MCF 10A (cell line): ENCODE measurements at regions of chr13 and their contacts with region 1.

Region 1: DNA sequence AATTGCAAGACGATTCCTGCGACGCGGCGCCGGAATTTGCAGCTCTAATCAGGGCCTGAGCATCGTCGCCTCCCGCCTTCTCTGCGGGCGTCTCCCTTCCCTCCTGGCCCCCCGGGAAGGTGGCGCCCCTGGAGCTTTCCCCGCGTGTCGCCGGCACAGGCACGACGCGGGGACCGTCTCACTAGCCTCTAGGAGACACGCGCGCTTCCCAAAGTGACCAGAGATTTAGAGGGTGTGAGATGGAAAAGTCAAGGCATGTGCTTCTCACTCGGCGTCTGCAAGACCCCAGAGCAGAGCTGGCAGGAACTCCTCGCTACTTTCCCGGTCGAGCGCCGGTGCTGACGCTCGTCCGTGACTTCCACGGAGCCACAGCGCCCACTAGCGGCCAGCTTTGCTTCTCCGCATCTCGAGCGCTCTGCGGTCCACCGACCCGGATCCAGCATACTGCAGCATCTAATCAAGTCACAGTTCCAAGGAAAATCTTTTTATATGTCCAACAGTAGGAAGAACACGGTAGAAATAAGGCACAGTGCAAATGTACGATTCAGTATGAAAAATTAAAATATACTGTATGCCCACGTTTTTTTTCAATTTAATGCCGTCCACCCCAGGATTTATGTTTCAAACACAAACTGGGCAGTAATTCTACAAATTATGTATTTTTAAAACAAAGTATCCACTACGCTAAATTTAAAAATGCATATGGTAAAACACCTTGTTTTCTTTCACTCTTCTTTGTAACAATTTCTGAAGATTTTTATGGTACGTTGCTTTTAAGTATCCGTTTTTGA is 977 bp upstream of the EFNB2 start:
- DNase-seq: peak; percentile 84
- H3K4me3 Mint-ChIP-seq: peak overlapping the region; percentile 95
- H3K27ac Mint-ChIP-seq: peak overlapping the region; percentile 46
- H3K4me1 Mint-ChIP-seq: no peaks in the 10 kb centered on the region
- H3K27me3 Mint-ChIP-seq: no peaks in the 10 kb centered on the region
- CTCF ChIP-seq: peak; percentile 91

Region 2: DNA sequence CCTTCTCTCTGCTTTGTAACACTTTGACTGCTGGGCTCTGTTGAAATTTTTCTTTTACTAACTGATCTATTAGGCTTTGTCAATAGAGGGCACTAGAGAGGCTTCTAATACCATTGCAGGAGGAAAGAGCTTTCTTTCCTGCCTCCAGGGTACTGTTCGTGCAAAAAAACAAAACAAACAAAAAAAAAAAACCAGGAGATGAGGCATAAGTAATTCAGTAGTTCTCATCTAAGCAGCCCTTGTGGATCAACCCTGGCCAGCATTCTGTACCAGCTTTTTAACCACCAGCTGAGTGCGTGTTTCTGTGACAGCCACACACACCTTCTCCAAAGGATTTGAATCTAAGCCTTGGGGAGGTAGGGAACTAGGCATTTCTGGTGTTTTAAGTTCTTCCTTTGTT is 1762.7 kb before region 1 on chr13:
- CTCF ChIA-PET with region 1: interaction called, 4 read pairs
- POLR2A ChIA-PET with region 1: interaction called, 7 read pairs
- intact Hi-C with region 1: loop called (anchors 1 kb)
- DNase-seq: peak; percentile 68
- H3K4me3 Mint-ChIP-seq: no peak overlapping the region
- H3K27ac Mint-ChIP-seq: no peak overlapping the region
- H3K4me1 Mint-ChIP-seq: peaks cover 11% of the 10 kb centered on the region
- H3K27me3 Mint-ChIP-seq: no peaks in the 10 kb centered on the region
- CTCF ChIP-seq: peak; percentile 62

Region 3: DNA sequence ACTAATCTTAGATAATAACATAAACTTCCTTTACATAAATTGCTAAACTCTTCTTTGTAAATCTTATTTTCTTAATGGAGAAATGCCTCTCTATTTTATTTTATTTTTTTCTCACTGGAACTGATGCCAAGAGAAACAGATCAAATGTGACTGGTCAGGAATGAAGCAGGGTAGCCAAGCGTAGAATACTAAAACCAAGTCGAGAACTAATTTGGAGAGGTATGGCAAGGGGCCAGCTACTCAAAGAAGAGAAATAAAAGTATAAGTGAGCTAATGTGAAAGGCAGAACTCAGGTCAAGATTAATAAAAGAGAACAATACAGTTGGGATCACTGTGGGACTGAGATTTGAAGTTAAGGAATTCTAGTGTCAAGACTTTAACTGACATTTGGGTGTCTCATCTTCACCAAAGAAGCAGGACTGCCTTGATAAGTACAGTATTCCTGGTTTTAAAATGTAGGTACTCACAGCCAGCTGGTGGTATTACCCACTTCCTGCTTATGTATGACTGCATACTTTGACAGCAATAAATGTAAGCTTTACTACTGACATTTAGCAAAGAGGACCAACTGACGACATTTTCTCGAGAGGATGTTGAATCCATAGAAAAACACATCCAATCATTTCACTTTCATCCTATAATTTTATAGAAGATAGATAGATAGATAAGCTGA is 1193.2 kb before region 1 on chr13:
- CTCF ChIA-PET with region 1: no interaction called
- POLR2A ChIA-PET with region 1: no interaction called
- intact Hi-C with region 1: no loop called
- DNase-seq: peak; percentile 6
- H3K4me3 Mint-ChIP-seq: no peak overlapping the region
- H3K27ac Mint-ChIP-seq: no peak overlapping the region
- H3K4me1 Mint-ChIP-seq: peaks cover 11% of the 10 kb centered on the region
- H3K27me3 Mint-ChIP-seq: no peaks in the 10 kb centered on the region
- CTCF ChIP-seq: no peak

Region 4: DNA sequence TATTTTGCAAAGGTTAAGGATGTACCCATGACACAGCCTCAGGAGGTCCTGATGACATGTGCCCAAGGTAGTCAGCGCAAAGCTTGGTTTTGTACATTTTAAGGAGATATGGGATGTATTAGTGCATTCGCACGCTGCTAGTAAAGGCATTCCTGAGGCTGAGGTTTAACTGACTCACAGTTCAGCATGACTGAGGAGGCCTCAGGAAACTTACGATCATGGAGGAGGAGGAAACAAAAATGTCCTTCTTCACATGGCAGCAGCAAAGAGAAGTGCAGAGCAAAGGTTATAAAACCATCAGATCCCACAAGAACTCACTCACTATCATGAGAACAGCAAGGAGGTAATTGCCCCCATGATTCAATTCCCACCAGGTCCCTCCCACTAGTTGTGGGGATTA is 1018.4 kb before region 1 on chr13:
- CTCF ChIA-PET with region 1: no interaction called
- POLR2A ChIA-PET with region 1: no interaction called
- intact Hi-C with region 1: loop called (anchors 10 kb)
- DNase-seq: no peak
- H3K4me3 Mint-ChIP-seq: no peak overlapping the region
- H3K27ac Mint-ChIP-seq: no peak overlapping the region
- H3K4me1 Mint-ChIP-seq: peaks cover 9% of the 10 kb centered on the region
- H3K27me3 Mint-ChIP-seq: no peaks in the 10 kb centered on the region
- CTCF ChIP-seq: no peak

Region 5: DNA sequence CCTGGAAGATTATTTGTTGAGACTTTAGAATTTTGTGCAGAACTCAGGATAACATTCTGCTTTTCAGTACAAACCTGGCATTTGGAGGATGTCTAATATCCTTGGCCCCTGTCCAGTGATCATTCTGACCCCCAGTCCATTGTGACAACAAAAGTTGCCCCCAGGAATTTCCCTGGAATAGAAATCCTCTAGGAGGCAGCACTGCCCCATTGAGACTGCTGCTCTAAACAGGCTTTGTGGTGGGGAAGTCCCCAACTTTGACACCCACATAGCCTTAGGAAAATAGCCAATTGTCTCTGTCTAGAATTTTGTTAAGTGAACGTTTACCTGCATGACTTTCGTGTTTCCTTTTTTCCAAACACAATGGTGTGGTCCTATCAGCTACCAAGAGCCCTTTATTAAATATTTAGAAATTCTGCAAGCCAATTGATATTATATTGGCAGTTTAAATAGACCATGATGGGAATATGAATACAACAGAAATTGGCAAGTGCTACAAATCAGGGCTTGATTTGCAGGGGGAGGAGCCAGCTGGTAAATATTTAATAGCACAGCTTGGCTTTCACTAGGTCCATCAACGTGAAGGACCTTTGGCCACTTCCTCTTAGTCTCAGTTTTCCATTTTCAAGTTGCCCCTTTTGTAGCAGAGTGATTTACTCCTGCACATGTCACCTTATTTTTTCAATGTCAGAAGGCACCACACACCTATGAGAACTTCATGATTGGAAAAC is 452.7 kb before region 1 on chr13:
- CTCF ChIA-PET with region 1: interaction called, 26 read pairs
- POLR2A ChIA-PET with region 1: interaction called, 3 read pairs
- intact Hi-C with region 1: loop called (anchors 1 kb)
- DNase-seq: peak; percentile 84
- H3K4me3 Mint-ChIP-seq: no peak overlapping the region
- H3K27ac Mint-ChIP-seq: no peak overlapping the region
- H3K4me1 Mint-ChIP-seq: peaks cover 22% of the 10 kb centered on the region
- H3K27me3 Mint-ChIP-seq: no peaks in the 10 kb centered on the region
- CTCF ChIP-seq: peak; percentile 73

Region 6: GRCh38 chr13:106471957-106472543 is 64.4 kb before region 1 on chr13:
- CTCF ChIA-PET with region 1: interaction called, 6 read pairs
- POLR2A ChIA-PET with region 1: interaction called, 5 read pairs
- intact Hi-C with region 1: loop called (anchors 1 kb)
- DNase-seq: peak; percentile 94
- H3K4me3 Mint-ChIP-seq: peak overlapping the region; percentile 61
- H3K27ac Mint-ChIP-seq: peak overlapping the region; percentile 58
- H3K4me1 Mint-ChIP-seq: peaks cover 10% of the 10 kb centered on the region
- H3K27me3 Mint-ChIP-seq: no peaks in the 10 kb centered on the region
- CTCF ChIP-seq: no peak

Region 7: DNA sequence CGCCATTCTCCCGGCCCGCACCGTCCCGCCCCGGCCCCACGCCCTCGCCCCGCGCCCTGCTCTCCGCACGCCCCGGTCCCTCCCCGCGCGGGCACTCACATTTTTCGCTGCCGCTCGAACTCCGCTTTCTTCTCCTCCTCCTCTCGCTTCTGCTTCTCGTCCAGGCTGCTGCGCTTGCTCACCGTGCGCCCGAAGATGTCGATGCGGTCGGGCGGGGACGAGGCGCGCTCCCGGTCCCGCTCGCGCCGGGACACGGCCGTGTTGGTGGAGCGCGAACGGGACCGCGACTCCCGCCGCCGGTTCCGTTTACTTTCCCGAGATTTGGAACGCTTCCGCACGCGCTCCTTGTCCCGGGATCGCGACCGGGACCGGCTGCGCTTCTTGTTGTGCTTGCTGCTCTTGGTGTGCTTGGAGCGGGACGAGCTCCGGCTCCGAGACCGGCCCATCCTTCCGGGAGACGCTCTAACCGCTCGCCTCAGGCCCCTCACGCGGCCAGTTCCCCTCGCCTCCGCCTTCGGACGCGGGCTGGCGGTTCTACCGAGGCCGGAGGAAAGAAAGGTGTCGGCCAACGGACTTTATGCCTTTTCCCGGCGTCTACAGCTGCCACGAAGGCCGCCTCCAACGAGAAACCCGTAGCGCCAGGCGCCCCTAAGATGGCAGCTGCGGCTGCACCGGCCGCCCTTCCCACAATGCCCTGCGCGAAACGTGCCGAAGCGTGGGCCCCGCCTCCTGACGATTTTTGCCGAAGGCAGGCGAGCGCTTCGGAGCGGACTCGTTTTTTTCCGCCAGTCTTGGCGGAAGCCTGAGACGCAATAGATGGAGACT is 31.2 kb after region 1 on chr13 and contains the start of gene ARGLU1:
- CTCF ChIA-PET with region 1: interaction called, 11 read pairs
- POLR2A ChIA-PET with region 1: interaction called, 83 read pairs
- intact Hi-C with region 1: loop called (anchors 2 kb)
- DNase-seq: peak; percentile 92
- H3K4me3 Mint-ChIP-seq: peak within 1 kb of the TSS; percentile 81
- H3K27ac Mint-ChIP-seq: peak within 1 kb of the TSS; percentile 32
- H3K4me1 Mint-ChIP-seq: peaks cover 38% of the 10 kb centered on the region
- H3K27me3 Mint-ChIP-seq: no peaks in the 10 kb centered on the region
- CTCF ChIP-seq: no peak
- total RNA-seq, gene ARGLU1: 91.7 and 94.4 TPM in 2 replicates